Right cardiac atrium (tissue), 5 donors: ENCODE measurements at regions of chr12 and their contacts with region 1.

Region 1: GRCh38 chr12:89352492-89353187 is at the start of gene DUSP6:
- DNase-seq: peak; percentile 94 to 96 (median 96)
- ATAC-seq: peak; percentile 84 to 88
- H3K4me3 ChIP-seq: peak within 1 kb of the TSS; percentile 60
- H3K27ac ChIP-seq: peak within 1 kb of the TSS; percentile 88
- H3K4me1 ChIP-seq: peaks cover 3% of the 10 kb centered on the region
- H3K27me3 ChIP-seq: no peaks in the 10 kb centered on the region
- total RNA-seq, gene DUSP6: 18.6 to 27.8 (median 24.1) TPM

Region 2: DNA sequence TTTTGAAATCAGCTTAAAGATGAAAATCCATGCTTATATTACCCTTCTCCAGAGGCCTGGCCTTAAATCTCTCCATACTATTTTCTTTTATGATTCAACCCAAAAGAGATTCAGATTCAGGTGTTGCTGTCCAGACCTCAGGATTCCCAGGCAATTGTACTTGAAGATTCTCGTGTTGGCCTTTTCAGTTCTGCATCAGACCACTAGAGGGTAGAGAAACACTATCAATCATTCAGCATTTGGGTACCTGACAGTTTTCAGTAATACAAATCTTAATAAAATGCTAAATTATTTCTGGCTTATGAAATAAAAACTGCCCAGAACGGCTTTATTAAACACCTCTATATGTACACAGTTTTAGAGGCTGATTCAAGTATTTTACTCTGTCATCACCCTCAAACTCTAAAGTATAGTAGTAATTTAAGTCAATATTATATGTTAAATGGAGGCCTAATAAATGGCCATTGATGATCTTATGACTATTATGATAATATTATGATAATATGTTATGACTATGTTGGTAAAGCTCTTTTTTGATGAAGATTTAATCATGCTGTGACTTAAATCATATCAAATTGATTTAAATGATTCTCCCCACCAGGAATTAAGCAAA is 301.5 kb before region 1 on chr12:
- intact Hi-C with region 1: loop called (anchors 5 to 10 kb)
- DNase-seq: no peak
- ATAC-seq: peak; percentile 64 to 81
- H3K4me3 ChIP-seq: no peak overlapping the region
- H3K27ac ChIP-seq: no peak overlapping the region
- H3K4me1 ChIP-seq: no peaks in the 10 kb centered on the region
- H3K27me3 ChIP-seq: no peaks in the 10 kb centered on the region

Region 3: DNA sequence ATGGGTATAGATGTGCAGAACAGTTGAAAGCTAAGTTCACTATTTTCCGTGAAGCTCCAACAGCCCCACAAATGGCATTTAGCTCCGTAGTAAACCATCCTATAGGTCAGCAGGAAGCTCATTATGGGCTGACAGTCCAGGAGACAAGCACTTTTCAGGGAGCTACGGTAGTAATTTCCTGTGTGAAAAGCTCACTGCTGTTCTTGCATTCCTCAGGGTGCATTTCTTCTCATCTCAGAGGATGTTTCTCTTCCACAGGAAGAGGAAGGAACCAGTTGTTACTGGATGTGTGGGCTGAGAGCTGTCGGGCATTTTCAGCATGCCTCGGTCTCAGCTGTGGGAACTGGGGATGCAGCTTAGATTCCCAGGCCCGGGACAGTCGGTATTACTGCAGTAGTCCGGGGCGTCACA is 99.2 kb after region 1 on chr12:
- intact Hi-C with region 1: loop called (anchors 2 to 10 kb)
- DNase-seq: peak; percentile 39 to 76 (median 60)
- ATAC-seq: peak; percentile 71 to 72
- H3K4me3 ChIP-seq: no peak overlapping the region
- H3K27ac ChIP-seq: peak overlapping the region; percentile 79
- H3K4me1 ChIP-seq: peaks cover 6% of the 10 kb centered on the region
- H3K27me3 ChIP-seq: no peaks in the 10 kb centered on the region